CD4-positive, alpha-beta T cell (primary cell): ENCODE measurements at regions of chr13 and their contacts with region 1.

Region 1: GRCh38 chr13:32117701-32118100 is 86.1 kb downstream of the FRY start:
- DNase-seq: peak in 1 of 14 experiments; percentile 19
- ATAC-seq: no peak
- H3K4me3 ChIP-seq: no peak overlapping the region
- H3K4me3 Mint-ChIP-seq: no peak overlapping the region
- H3K27ac ChIP-seq: no peak overlapping the region
- H3K27ac Mint-ChIP-seq: no peak overlapping the region
- H3K4me1 ChIP-seq: no peaks in the 10 kb centered on the region
- H3K4me1 Mint-ChIP-seq: peaks cover 27% of the 10 kb centered on the region
- H3K27me3 ChIP-seq: no peaks in the 10 kb centered on the region
- H3K27me3 Mint-ChIP-seq: no peaks in the 10 kb centered on the region
- CTCF ChIP-seq: no peak

Region 2: DNA sequence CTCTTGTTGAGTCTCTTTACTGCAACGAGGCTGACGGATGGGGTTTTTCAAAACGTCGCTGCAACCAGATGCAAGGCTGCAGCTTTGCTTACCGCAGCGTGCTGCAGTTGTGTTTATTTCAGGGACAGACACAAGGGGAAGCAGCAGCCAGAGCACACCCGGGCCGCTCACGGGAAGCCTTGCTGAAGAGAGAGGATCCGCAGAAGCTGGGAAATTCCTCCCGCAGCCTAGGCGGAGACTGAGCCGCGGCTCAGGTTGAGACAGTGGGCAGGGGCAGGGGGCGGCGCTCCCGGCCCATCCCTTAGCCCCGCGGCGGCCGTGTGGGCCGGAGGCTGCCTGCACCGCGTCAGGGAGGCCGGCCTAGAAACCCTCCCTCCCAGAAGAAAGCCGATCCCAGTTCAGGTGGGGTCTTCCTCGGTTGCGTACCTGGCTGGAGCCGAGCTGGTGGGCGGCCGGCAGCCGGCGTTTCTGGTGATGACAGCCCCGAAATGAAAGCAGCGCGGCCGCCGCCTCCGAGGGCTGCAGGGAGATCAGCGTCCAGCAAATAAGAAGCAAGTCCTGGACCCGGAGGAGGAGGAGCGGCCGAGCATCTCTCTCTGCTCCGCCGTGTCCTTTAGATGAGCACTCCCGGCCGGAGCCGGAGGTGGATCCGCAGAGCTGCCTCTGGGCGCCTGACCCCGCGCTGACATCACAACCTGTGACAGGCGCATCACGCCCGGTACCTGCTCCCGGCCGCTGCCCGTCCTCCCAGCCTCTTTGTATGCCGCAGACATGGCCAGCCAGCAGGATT is 86.5 kb before region 1 on chr13 and contains the start of gene FRY:
- CTCF ChIA-PET with region 1: no interaction called
- POLR2A ChIA-PET with region 1: no interaction called
- intact Hi-C with region 1: loop called in 1 of 2 experiments (anchors 5 kb)
- DNase-seq: peak; percentile 12 to 84 (median 36)
- ATAC-seq: peak; percentile 80
- H3K4me3 ChIP-seq: peak within 1 kb of the TSS; percentile 85
- H3K4me3 Mint-ChIP-seq: peak within 1 kb of the TSS; percentile 91
- H3K27ac ChIP-seq: peak within 1 kb of the TSS in 1 of 2 donors; percentile 57
- H3K27ac Mint-ChIP-seq: peak within 1 kb of the TSS; percentile 75
- H3K4me1 ChIP-seq: peaks cover 6% of the 10 kb centered on the region
- H3K4me1 Mint-ChIP-seq: peaks cover 60% of the 10 kb centered on the region
- H3K27me3 ChIP-seq: no peaks in the 10 kb centered on the region
- H3K27me3 Mint-ChIP-seq: no peaks in the 10 kb centered on the region
- CTCF ChIP-seq: peak; percentile 8
- total RNA-seq, gene FRY: 13.7 to 18.4 TPM